Caco-2 (cell line): ENCODE measurements at regions of chr20 and their contacts with region 1.

Region 1: DNA sequence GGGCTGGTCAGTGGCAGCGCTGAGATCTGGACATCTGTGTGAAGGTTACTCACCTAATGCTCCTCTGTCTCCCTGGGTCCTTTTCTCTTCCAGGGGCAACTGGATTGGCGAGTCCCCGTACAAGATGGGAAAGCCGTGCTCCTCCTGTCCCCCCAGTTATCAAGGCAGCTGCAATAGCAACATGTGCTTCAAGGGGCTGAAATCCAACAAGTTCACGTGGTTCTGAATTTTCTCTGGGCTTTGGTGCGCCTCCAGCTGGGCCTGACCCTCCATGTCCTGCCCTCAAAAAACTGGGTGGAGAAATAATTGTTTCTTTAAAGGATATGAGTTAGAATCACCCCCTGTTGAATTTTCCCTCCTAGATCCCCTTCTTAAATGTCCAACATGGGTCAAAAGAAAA is 4.9 kb upstream of the HNF4A start:
- DNase-seq: no peak
- H3K4me3 ChIP-seq: no peak overlapping the region
- H3K4me3 Mint-ChIP-seq: no peak overlapping the region
- H3K27ac Mint-ChIP-seq: no peak overlapping the region
- H3K4me1 ChIP-seq: peaks cover 60% of the 10 kb centered on the region
- H3K4me1 Mint-ChIP-seq: peaks cover 40% of the 10 kb centered on the region
- H3K27me3 ChIP-seq: no peaks in the 10 kb centered on the region
- H3K27me3 Mint-ChIP-seq: no peaks in the 10 kb centered on the region
- CTCF ChIP-seq: no peak

Region 2: DNA sequence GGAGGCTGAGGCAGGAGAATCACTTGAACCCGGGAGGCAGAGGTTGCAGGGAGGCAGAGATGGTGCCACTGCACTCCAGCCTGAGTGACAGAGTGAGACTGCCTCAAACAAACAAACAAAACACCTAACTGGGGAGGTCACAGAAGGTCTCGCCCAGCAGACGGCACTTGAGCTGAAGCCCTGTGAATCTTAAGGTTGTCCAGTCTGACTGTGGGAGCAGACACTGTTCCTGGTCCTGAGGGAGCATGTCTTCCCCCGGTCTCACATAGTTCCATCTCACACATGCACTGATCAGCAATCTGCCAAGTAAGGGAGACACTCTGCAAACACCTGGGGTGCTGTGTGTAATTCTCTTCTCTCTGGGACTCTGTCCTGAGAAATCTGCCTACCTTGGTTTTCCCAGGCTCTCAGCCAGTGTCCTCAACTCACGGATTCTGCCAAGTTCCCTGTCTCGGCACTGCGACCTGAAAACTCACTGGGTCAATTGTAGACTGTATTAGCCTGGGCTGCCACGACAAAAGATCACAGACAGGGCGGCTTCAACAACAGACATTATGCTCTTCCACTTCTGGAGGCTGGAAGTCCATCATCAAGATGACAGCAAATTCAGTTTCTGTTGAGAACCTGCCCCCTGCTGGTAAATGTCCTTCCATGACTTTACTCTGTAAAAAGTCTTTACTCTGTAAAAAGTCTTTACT is 257.9 kb before region 1 on chr20:
- CTCF ChIA-PET with region 1: no interaction called
- POLR2A ChIA-PET with region 1: no interaction called
- intact Hi-C with region 1: no loop called
- DNase-seq: peak; percentile 42 to 56
- H3K4me3 ChIP-seq: no peak overlapping the region
- H3K4me3 Mint-ChIP-seq: no peak overlapping the region
- H3K27ac Mint-ChIP-seq: no peak overlapping the region
- H3K4me1 ChIP-seq: peaks cover 10% of the 10 kb centered on the region
- H3K4me1 Mint-ChIP-seq: no peaks in the 10 kb centered on the region
- H3K27me3 ChIP-seq: no peaks in the 10 kb centered on the region
- H3K27me3 Mint-ChIP-seq: no peaks in the 10 kb centered on the region
- CTCF ChIP-seq: peak; percentile 44 to 78

Region 3: GRCh38 chr20:44231193-44231592 is 119.4 kb before region 1 on chr20:
- CTCF ChIA-PET with region 1: no interaction called
- POLR2A ChIA-PET with region 1: no interaction called
- intact Hi-C with region 1: no loop called
- DNase-seq: peak in 1 of 2 experiments; percentile 32
- H3K4me3 ChIP-seq: no peak overlapping the region
- H3K4me3 Mint-ChIP-seq: no peak overlapping the region
- H3K27ac Mint-ChIP-seq: no peak overlapping the region
- H3K4me1 ChIP-seq: no peaks in the 10 kb centered on the region
- H3K4me1 Mint-ChIP-seq: peaks cover 7% of the 10 kb centered on the region
- H3K27me3 ChIP-seq: no peaks in the 10 kb centered on the region
- H3K27me3 Mint-ChIP-seq: no peaks in the 10 kb centered on the region
- CTCF ChIP-seq: no peak

Region 4: GRCh38 chr20:44302026-44302669 is 48.4 kb before region 1 on chr20:
- CTCF ChIA-PET with region 1: no interaction called
- POLR2A ChIA-PET with region 1: interaction called, 10 read pairs
- intact Hi-C with region 1: no loop called
- DNase-seq: peak; percentile 84 to 87
- H3K4me3 ChIP-seq: no peak overlapping the region
- H3K4me3 Mint-ChIP-seq: peak overlapping the region; percentile 59
- H3K27ac Mint-ChIP-seq: peak overlapping the region; percentile 95
- H3K4me1 ChIP-seq: peaks cover 23% of the 10 kb centered on the region
- H3K4me1 Mint-ChIP-seq: peaks cover 31% of the 10 kb centered on the region
- H3K27me3 ChIP-seq: no peaks in the 10 kb centered on the region
- H3K27me3 Mint-ChIP-seq: no peaks in the 10 kb centered on the region
- CTCF ChIP-seq: no peak